CD4-positive, alpha-beta T cell (primary cell): ENCODE measurements at regions of chr20 and their contacts with region 1.

Region 1: DNA sequence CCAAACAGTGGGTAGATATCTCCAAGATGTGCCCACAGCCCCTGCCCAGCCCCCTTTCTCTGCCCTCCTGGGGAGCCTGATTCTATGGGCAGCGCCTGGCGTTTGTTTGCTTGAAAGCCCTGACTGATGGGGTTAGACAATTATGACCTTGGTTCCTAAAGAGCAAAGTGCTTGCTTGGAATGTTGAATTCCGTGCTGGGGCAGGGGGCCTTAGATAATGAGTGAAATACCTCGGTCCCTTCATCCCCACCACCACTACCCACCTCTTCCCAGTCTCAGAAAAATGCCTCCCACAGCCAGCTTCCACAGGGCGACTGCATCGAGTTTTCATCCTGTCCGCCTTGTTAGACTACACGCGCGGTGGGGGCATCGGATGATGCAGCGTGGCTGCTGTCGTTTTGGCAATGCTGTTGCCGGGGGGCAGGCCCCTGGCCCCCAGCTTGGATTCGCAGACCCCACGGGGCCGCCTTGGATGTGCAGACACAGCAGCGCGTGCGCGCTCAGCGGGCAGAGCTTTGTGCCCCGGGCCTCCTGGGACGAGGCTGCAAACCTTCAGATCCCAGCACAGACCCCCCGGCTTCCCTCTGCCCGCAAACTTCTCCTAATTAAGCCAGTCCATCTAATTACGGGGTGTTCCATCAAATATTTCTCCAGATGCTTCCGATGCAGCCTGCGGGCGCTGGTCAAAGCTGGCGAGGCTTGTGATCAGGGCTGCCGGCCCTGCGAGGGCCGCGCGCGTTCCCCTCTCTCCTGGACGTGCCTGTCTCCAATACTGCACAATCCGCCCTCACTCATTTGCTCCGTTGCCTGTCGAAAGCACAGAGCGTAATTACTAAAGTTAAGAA is 86.1 kb downstream of the LINC00237 start:
- DNase-seq: no peak
- ATAC-seq: no peak
- H3K4me3 ChIP-seq: no peak overlapping the region
- H3K4me3 Mint-ChIP-seq: no peak overlapping the region
- H3K27ac ChIP-seq: no peak overlapping the region
- H3K27ac Mint-ChIP-seq: no peak overlapping the region
- H3K4me1 ChIP-seq: no peaks in the 10 kb centered on the region
- H3K4me1 Mint-ChIP-seq: no peaks in the 10 kb centered on the region
- H3K27me3 ChIP-seq: peaks cover 17 to 19% of the 10 kb centered on the region in 2 experiments
- H3K27me3 Mint-ChIP-seq: peaks cover 70% of the 10 kb centered on the region
- CTCF ChIP-seq: no peak

Region 2: GRCh38 chr20:20956513-20956931 is 63.5 kb before region 1 on chr20:
- CTCF ChIA-PET with region 1: no interaction called
- POLR2A ChIA-PET with region 1: no interaction called
- intact Hi-C with region 1: loop called in 1 of 2 experiments (anchors 10 kb)
- DNase-seq: no peak
- ATAC-seq: no peak
- H3K4me3 ChIP-seq: no peak overlapping the region
- H3K4me3 Mint-ChIP-seq: no peak overlapping the region
- H3K27ac ChIP-seq: no peak overlapping the region
- H3K27ac Mint-ChIP-seq: no peak overlapping the region
- H3K4me1 ChIP-seq: no peaks in the 10 kb centered on the region
- H3K4me1 Mint-ChIP-seq: no peaks in the 10 kb centered on the region
- H3K27me3 ChIP-seq: peaks cover 0 to 10% of the 10 kb centered on the region in 2 experiments
- H3K27me3 Mint-ChIP-seq: peaks cover 44% of the 10 kb centered on the region
- CTCF ChIP-seq: no peak